ENCODE measurements at regions of chr10 and their contacts with region 1.

Region 1: DNA sequence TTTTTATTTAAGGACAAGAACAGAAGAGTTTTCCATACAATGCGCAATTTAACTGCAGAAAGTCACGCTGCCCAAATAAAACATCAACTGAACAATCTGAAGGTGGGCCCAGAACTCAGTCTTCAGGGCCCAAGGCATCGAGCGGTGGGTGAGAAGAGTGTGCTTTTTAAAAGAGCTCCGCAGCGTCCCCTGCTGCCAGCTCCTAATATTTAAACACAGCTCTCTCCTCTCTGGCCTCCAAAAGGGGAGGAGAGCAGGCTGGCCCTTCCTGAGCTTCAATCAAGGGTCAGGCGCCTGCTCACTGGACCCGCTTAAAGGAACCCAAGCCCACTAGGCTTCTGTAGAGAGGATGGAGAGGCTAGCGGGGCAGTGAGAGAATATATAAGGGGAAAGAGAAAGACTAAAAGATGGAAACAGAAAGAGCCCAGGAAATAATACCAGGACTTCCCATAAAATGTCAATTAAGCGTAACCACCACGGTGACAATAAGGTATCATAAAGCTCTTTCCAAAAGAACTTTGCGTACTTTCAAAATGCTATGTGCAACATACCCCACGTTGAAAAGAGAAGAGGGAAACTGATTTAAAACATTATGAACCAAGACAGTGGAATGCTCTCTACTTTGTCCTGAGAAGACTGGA is 2.8 kb downstream of the FAM53B start:
- DNase-seq: peak; percentile 50
- ATAC-seq: peak; percentile 60
- H3K4me3 ChIP-seq: no peak overlapping the region
- H3K27ac ChIP-seq: no peak overlapping the region
- H3K4me1 ChIP-seq: peaks cover 29 to 51% of the 10 kb centered on the region in 2 experiments
- H3K27me3 ChIP-seq: no peaks in the 10 kb centered on the region
- CTCF ChIP-seq: peak; percentile 76 to 92 (median 89)
- POLR2A ChIP-seq: no peak
- RAD21 ChIP-seq: peak; percentile 88

Region 2: DNA sequence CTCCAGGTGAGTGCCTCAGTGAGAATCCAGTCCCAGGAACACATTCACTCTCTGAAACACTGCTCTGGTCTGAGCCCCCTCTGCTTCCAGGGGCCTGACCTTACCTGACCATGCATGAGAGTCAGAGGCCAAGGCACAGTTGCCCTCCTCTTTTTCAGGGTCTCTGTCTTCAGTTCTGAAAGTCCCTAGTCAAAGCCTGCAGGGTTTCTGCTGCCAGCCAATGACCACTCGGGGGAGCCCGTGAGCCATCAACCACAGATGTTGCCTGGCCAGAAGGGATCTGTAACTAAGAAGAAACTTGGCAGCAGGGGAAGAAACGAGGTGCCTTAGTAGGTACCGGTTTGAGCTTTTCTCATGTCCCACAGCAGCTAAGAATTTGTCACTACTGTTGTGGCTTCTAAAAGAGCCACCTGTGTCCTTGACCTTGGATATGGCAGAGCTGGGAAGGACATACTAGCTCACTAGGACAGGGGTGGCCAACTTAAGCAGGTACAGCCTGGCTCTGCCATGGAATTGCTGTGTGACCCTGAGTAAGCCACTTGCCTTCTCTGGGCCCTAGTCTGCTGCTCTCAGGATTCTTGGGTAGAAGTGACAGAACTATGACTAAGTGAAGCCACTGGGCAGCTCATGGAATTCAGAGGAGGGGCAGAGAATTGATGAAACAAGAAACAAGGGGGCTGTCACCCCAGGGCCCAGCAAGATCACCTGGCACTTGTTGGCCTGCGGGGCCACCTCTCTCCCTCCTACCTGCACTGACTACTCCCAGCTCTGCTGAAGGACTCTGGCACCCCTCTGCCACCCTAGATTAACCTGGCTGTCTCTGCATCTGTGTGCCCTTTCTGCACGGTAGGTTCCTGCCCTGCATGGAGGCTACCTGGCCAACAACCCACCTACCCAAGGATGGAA is 1159.1 kb before region 1 on chr10:
- CTCF ChIA-PET with region 1: no interaction called
- POLR2A ChIA-PET with region 1: no interaction called
- RAD21 ChIA-PET with region 1: no interaction called
- intact Hi-C with region 1: loop called (anchors 5 kb)
- DNase-seq: peak; percentile 68
- ATAC-seq: peak; percentile 86
- H3K4me3 ChIP-seq: no peak overlapping the region
- H3K27ac ChIP-seq: no peak overlapping the region
- H3K4me1 ChIP-seq: peaks cover 0 to 3% of the 10 kb centered on the region in 2 experiments; a peak in 2 of 4 replicates
- H3K27me3 ChIP-seq: peaks cover 51% of the 10 kb centered on the region
- CTCF ChIP-seq: peak; percentile 94 to 99 (median 99)
- POLR2A ChIP-seq: no peak
- RAD21 ChIP-seq: peak; percentile 96

Region 3: GRCh38 chr10:124530215-124530665 is 211.2 kb before region 1 on chr10:
- CTCF ChIA-PET with region 1: interaction called, 46 read pairs
- POLR2A ChIA-PET with region 1: no interaction called
- RAD21 ChIA-PET with region 1: interaction called, 7 to 10 read pairs
- intact Hi-C with region 1: loop called (anchors 1 kb)
- DNase-seq: peak; percentile 62
- ATAC-seq: peak; percentile 88
- H3K4me3 ChIP-seq: no peak overlapping the region
- H3K27ac ChIP-seq: no peak overlapping the region
- H3K4me1 ChIP-seq: peaks cover under 1 to 24% of the 10 kb centered on the region in 2 experiments; a peak in 3 of 4 replicates
- H3K27me3 ChIP-seq: no peaks in the 10 kb centered on the region
- CTCF ChIP-seq: peak; percentile 92 to 98 (median 98)
- POLR2A ChIP-seq: no peak
- RAD21 ChIP-seq: peak; percentile 99

Region 4: DNA sequence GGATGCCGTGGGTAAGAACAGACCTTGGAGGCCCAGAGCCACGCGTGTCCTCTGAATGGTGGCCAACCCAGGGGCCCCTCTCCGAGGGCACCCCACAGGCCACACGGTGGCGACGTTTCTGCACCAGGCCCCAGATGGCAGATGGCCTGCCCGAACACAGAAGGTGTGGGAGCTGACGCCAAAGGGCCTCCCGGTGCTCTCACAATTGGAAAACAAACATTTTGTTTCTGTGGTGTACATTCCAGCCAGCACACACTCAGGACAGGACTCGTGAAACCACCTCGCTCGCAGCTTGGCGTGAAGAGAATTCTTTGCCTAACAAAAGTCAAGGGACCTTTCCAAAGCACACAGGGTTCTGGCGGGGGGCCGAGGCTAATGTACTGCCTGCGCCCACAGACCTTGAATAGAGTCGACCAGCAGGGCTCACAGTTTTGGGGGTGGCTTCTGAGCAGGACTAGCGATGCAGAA is 109.3 kb before region 1 on chr10:
- CTCF ChIA-PET with region 1: interaction called, 8 read pairs
- POLR2A ChIA-PET with region 1: no interaction called
- RAD21 ChIA-PET with region 1: interaction called in 1 of 2 experiments, 4 read pairs
- intact Hi-C with region 1: loop called (anchors 2 kb)
- DNase-seq: no peak
- ATAC-seq: peak; percentile 36; the same call in 1 of the 2 replicates
- H3K4me3 ChIP-seq: no peak overlapping the region
- H3K27ac ChIP-seq: no peak overlapping the region
- H3K4me1 ChIP-seq: peaks cover 10 to 12% of the 10 kb centered on the region in 2 experiments
- H3K27me3 ChIP-seq: no peaks in the 10 kb centered on the region
- CTCF ChIP-seq: peak in 2 of 3 experiments; percentile 35 to 50; a peak in 4 of 6 replicates
- POLR2A ChIP-seq: no peak
- RAD21 ChIP-seq: peak; percentile 66

Region 5: DNA sequence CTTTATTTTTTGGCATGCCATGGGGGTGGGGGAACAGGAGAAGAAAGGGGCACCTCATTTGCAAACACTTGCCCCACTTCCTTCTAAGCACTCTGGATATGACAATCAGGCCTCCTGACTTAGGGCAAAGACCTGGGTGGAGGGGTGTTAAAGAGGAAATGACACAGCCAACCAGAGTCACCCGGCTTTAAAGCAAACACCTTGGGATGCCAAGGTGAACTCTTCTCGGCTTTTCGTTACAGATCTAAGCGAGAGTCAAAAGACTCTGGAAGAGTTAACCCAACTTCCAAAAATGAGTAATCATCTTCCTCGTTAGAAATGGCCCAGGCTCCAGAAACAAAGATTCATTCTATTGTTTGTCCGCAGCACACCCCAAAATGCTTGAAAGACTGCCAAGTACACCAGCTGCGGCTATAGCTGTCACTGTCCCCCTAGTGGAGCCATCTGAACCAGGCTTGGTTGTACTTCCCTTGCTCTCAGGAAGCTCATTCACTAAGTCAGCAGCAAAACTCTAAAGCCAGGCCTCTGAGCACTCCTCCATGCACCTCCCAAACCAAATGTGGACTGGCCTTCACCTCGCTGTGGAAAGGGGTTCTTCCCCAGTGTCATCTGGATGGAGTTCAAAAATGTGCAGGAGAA is 22.1 kb before region 1 on chr10:
- CTCF ChIA-PET with region 1: interaction called, 25 read pairs
- POLR2A ChIA-PET with region 1: no interaction called
- RAD21 ChIA-PET with region 1: no interaction called
- intact Hi-C with region 1: no loop called
- DNase-seq: no peak
- ATAC-seq: peak; percentile 68
- H3K4me3 ChIP-seq: no peak overlapping the region
- H3K27ac ChIP-seq: no peak overlapping the region
- H3K4me1 ChIP-seq: peaks cover 7 to 28% of the 10 kb centered on the region in 2 experiments; a peak in 3 of 4 replicates
- H3K27me3 ChIP-seq: no peaks in the 10 kb centered on the region
- CTCF ChIP-seq: peak in 2 of 3 experiments; percentile 53 to 57; a peak in 4 of 6 replicates
- POLR2A ChIP-seq: no peak
- RAD21 ChIP-seq: no peak

Region 6: GRCh38 chr10:124755581-124755980 is 14.2 kb after region 1 on chr10:
- CTCF ChIA-PET with region 1: interaction called, 27 read pairs
- POLR2A ChIA-PET with region 1: interaction called, 3 read pairs
- RAD21 ChIA-PET with region 1: interaction called in 1 of 2 experiments, 6 read pairs
- intact Hi-C with region 1: no loop called
- DNase-seq: no peak
- ATAC-seq: no peak
- H3K4me3 ChIP-seq: no peak overlapping the region
- H3K27ac ChIP-seq: no peak overlapping the region
- H3K4me1 ChIP-seq: no peaks in the 10 kb centered on the region
- H3K27me3 ChIP-seq: no peaks in the 10 kb centered on the region
- CTCF ChIP-seq: no peak
- POLR2A ChIP-seq: no peak
- RAD21 ChIP-seq: no peak

Measured in HCT116 (cell line).